Calu3 (cell line): ENCODE measurements at regions of chr5 and their contacts with region 1.

Region 1: DNA sequence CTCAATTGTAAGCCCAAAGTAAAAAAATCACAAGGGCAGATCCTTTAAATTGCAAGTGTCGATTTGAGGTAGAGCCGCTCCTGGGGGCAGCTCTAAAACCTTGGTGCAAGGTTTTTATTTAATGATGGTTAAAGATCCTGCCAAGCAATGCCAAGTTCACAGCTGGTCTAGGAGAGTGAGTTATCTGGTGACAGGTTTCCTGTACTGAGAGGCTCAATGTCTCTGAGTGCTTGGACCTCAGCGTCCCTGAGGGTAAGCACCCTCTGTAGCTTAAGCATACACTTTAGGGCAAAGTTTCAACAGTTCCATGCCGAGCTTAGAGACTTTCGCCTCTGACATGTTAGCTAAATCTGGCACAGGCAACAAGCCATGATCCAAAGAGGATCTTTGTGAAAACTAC is 119.8 kb upstream of the EGFLAM start:
- DNase-seq: no peak
- H3K4me3 Mint-ChIP-seq: no peak overlapping the region
- H3K27ac Mint-ChIP-seq: no peak overlapping the region
- H3K4me1 Mint-ChIP-seq: peaks cover 6% of the 10 kb centered on the region
- H3K27me3 Mint-ChIP-seq: no peaks in the 10 kb centered on the region
- CTCF ChIP-seq: no peak

Region 2: DNA sequence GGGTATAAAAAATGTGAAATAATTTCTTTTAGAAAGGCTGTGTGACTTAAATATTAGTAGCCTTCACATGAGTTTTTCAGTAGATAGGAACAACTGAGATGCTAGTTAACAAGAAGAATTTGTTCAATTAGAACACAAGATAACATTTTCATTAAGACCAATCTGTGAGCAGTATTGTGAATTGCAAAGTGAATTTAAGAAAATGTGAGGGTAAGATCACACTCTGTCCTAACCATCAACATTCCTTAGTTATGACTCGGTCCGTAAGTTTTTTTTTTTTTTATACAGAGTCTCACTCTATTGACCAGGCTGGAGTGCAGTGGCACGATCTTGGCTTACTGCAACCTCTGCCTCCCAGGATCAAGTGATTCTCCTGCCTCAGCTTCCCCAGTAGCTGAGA is 60.4 kb before region 1 on chr5:
- CTCF ChIA-PET with region 1: no interaction called
- intact Hi-C with region 1: loop called (anchors 2 kb)
- DNase-seq: no peak
- H3K4me3 Mint-ChIP-seq: no peak overlapping the region
- H3K27ac Mint-ChIP-seq: no peak overlapping the region
- H3K4me1 Mint-ChIP-seq: peaks cover 8% of the 10 kb centered on the region
- H3K27me3 Mint-ChIP-seq: no peaks in the 10 kb centered on the region
- CTCF ChIP-seq: no peak